Sciatic nerve (tissue), 2 donors: ENCODE measurements at regions of chr10 and their contacts with region 1.

Region 1: DNA sequence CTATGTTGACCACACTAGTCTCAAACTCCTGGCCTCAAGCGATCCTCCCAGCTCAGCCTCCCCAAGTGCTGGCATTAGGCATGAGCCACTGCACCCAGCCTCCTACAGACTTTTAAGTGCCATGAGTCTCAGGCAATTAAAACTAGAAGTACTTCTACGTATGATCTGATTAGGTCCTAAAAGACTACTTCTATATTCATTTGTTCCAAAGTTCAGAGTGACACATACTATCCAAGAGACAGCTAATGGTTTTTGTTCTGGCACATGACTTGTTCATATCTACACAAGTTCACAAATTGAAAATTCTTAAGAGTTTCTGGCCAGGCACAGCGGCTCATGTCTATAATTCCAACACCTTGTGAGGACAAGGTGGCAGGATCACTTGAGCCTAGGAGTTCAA is 11.7 kb downstream of the ARHGAP19 start:
- DNase-seq: no peak
- ATAC-seq: no peak

Region 2: GRCh38 chr10:97334370-97335175 is 53.8 kb after region 1 on chr10 and contains the start of gene FRAT2:
- intact Hi-C with region 1: loop called (anchors 10 kb)
- DNase-seq: peak; percentile 94
- ATAC-seq: peak; percentile 97
- total RNA-seq, gene FRAT2: 8.0 TPM